T-cell (primary cell): ENCODE measurements at regions of chr10 and their contacts with region 1.

Region 1: DNA sequence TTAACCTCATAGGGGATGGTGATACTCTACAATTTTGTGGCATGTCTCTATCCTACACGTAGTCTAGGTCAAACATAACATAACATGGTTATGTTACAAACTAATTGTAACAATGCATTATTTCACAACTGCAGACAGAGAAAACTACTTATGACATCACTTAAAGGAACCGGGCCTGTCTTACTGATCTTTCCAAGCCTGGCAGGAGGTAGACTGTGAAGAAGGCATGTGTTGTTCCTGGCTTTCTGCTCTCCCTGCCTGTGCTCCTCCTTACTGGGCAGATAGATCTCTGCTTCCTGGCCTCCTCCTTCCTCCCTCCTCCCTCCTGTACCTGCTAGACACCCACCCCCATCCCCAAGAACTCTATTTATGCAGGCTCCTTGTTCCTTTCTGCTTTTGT is 5.4 kb downstream of the CACNB2 start:
- DNase-seq: no peak
- ATAC-seq: no peak
- H3K4me3 ChIP-seq: no peak overlapping the region
- H3K4me3 Mint-ChIP-seq: no peak overlapping the region
- H3K27ac ChIP-seq: no peak overlapping the region
- H3K27ac Mint-ChIP-seq: no peak overlapping the region
- H3K4me1 ChIP-seq: no peaks in the 10 kb centered on the region
- H3K4me1 Mint-ChIP-seq: peaks cover 0 to 3% (median 1%) of the 10 kb centered on the region in 3 donors
- H3K27me3 ChIP-seq: peaks cover 0 to 10% of the 10 kb centered on the region in 2 experiments
- H3K27me3 Mint-ChIP-seq: peaks cover 19 to 23% of the 10 kb centered on the region in 2 donors

Region 2: GRCh38 chr10:18056583-18056982 is 89.1 kb before region 1 on chr10:
- CTCF ChIA-PET with region 1: no interaction called
- POLR2A ChIA-PET with region 1: no interaction called
- DNase-seq: no peak
- ATAC-seq: no peak
- H3K4me3 ChIP-seq: no peak overlapping the region
- H3K4me3 Mint-ChIP-seq: no peak overlapping the region
- H3K27ac ChIP-seq: no peak overlapping the region
- H3K27ac Mint-ChIP-seq: no peak overlapping the region
- H3K4me1 ChIP-seq: no peaks in the 10 kb centered on the region
- H3K4me1 Mint-ChIP-seq: no peaks in the 10 kb centered on the region
- H3K27me3 ChIP-seq: no peaks in the 10 kb centered on the region
- H3K27me3 Mint-ChIP-seq: no peaks in the 10 kb centered on the region

Region 3: GRCh38 chr10:18122753-18123152 is 22.9 kb before region 1 on chr10:
- CTCF ChIA-PET with region 1: interaction called in 1 of 2 experiments, 10 read pairs
- POLR2A ChIA-PET with region 1: no interaction called
- DNase-seq: no peak
- ATAC-seq: no peak
- H3K4me3 ChIP-seq: no peak overlapping the region
- H3K4me3 Mint-ChIP-seq: no peak overlapping the region
- H3K27ac ChIP-seq: no peak overlapping the region
- H3K27ac Mint-ChIP-seq: no peak overlapping the region
- H3K4me1 ChIP-seq: no peaks in the 10 kb centered on the region
- H3K4me1 Mint-ChIP-seq: no peaks in the 10 kb centered on the region
- H3K27me3 ChIP-seq: no peaks in the 10 kb centered on the region
- H3K27me3 Mint-ChIP-seq: peaks cover 0 to 4% of the 10 kb centered on the region in 2 donors